ENCODE measurements at regions of chr16 and their contacts with region 1.

Region 1: GRCh38 chr16:89641458-89642119 is 15.9 kb downstream of the CHMP1A start:
- DNase-seq: no peak
- H3K4me3 Mint-ChIP-seq: peak overlapping the region; percentile 80
- H3K27ac Mint-ChIP-seq: no peak overlapping the region
- H3K4me1 Mint-ChIP-seq: peaks cover 6% of the 10 kb centered on the region
- H3K27me3 Mint-ChIP-seq: peaks cover 3% of the 10 kb centered on the region

Region 2: DNA sequence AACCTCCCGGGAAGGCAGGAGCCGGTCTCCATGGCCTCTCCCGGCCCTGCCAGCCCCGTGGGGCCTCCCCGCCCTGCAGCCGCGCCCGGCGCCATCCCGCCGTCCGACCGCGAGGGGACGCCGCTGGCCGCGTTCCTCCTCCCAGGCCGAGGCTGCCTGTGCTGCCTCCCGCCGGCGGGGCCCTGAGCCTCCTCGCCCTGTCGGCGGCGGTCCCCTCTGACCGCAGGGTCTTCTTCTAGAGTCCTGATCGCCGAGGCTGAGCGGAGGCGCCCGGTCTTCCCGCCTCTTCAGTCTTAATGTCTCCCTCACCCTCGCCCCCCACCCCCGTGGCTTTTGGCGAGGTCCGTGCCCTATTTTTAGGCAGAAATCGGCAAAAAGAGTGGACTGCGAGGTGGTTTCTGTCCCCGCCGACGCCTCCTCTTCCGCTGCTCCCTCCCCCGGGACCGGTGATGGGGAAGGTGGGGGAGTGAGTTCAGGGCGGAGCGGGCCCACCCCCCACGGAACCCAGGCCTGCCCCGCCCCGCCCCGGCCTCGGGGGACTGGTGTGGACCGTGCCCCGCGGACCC is 66.8 kb before region 1 on chr16:
- intact Hi-C with region 1: loop called (anchors 1 kb)
- DNase-seq: peak; percentile 87
- H3K4me3 Mint-ChIP-seq: peak overlapping the region; percentile 70
- H3K27ac Mint-ChIP-seq: peak overlapping the region; percentile 51
- H3K4me1 Mint-ChIP-seq: peaks cover 8% of the 10 kb centered on the region
- H3K27me3 Mint-ChIP-seq: peaks cover 23% of the 10 kb centered on the region

Region 3: GRCh38 chr16:89602273-89602951 is 39.2 kb before region 1 on chr16:
- intact Hi-C with region 1: loop called (anchors 2 kb)
- DNase-seq: peak; percentile 80
- H3K4me3 Mint-ChIP-seq: peak overlapping the region; percentile 53
- H3K27ac Mint-ChIP-seq: peak overlapping the region; percentile 62
- H3K4me1 Mint-ChIP-seq: peaks cover 9% of the 10 kb centered on the region
- H3K27me3 Mint-ChIP-seq: no peaks in the 10 kb centered on the region

Measured in activated CD4-positive, alpha-beta T cell treated with anti-CD3 and anti-CD28 coated beads, Interleukin-2, amount 10 ng/mL, durations not matched to agents 24 days and 14 days (primary cell).